ENCODE measurements at regions of chr11 and their contacts with region 1.

Region 1: DNA sequence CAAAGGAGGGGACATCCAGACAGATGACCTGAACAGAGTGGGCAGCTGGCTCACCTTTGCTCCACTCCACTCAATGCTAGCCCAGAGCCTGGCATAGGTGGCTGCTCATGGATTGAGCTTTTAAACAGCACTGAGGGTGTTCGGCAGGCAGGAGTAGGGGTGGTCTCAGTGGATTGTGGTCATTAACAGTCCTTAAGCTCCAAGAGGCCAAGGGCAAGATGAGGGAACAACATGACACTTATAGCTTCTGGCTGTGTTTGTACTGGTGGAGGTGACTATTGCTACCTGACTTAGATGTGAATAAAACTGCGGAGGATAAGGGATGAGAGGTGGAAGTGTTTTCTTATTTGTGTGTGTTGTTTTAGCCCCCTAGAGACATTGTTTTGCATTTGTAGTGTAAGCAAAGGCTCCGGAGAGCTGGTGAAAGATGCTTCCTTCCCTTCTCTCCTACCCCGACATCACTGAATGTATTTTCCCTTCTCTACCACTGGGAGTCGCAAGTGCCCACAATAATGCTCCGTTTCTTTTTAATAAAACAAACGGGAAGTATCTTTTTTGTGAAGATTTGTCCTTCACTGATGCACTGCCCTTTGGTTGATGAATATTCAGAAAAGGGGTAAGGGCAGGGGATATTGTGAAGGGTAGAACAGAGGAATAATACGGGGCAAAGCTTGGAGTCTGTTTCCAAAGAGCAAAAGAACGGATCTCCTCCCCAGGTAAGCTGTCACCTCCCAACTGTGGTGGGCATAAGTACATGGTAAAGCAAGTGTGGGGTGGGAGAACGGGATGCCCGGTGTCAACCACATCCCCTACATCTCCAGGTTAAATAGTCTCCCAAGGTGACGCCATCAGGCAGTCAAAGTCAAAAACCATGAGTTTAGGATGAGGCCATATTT is 27.5 kb upstream of the MTNR1B start:
- DNase-seq: no peak
- ATAC-seq: no peak
- H3K4me3 Mint-ChIP-seq: no peak overlapping the region
- H3K27ac Mint-ChIP-seq: no peak overlapping the region
- H3K4me1 Mint-ChIP-seq: no peaks in the 10 kb centered on the region
- H3K27me3 Mint-ChIP-seq: peaks cover 8% of the 10 kb centered on the region
- CTCF ChIP-seq: no peak

Region 2: GRCh38 chr11:92413757-92414513 is 528.0 kb before region 1 on chr11:
- CTCF ChIA-PET with region 1: no interaction called
- POLR2A ChIA-PET with region 1: no interaction called
- intact Hi-C with region 1: no loop called
- DNase-seq: no peak
- ATAC-seq: peak; percentile 45
- H3K4me3 Mint-ChIP-seq: peak overlapping the region; percentile 11
- H3K27ac Mint-ChIP-seq: no peak overlapping the region
- H3K4me1 Mint-ChIP-seq: peaks cover 11% of the 10 kb centered on the region
- H3K27me3 Mint-ChIP-seq: no peaks in the 10 kb centered on the region
- CTCF ChIP-seq: no peak

Region 3: DNA sequence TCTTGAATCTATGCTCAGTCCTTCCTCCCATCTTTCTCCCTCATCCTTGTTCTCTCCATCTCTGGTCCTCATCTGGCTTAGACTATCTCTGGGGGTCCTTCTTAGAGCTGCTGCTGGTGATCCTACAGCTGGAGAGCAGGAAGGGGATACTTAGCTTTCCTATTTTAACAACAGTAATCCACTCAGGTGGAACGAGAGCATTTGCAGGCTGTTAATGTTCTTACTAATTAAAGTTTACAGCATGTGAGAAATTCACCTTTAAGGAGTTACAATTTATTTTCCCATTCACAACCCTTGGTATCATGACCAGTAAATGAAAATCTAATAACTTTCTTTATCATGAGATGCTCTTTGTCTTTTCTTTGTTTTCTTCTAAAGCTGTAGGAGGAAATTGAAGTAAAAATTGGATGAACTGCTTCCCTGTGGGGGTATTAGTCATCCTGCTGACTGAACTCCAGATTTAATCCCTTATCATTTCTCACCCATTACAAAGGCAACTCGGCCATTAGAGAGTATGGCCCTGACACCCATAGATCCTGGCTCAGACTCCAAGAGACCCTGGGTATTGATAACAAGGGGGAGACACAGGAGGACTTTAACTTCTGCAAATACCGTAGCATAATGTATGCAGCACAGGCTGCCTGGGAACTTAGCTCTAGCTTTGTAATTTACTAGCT is 10.0 kb before region 1 on chr11:
- CTCF ChIA-PET with region 1: no interaction called
- POLR2A ChIA-PET with region 1: no interaction called
- intact Hi-C with region 1: no loop called
- DNase-seq: no peak
- ATAC-seq: no peak
- H3K4me3 Mint-ChIP-seq: no peak overlapping the region
- H3K27ac Mint-ChIP-seq: no peak overlapping the region
- H3K4me1 Mint-ChIP-seq: no peaks in the 10 kb centered on the region
- H3K27me3 Mint-ChIP-seq: no peaks in the 10 kb centered on the region
- CTCF ChIP-seq: no peak

Region 4: DNA sequence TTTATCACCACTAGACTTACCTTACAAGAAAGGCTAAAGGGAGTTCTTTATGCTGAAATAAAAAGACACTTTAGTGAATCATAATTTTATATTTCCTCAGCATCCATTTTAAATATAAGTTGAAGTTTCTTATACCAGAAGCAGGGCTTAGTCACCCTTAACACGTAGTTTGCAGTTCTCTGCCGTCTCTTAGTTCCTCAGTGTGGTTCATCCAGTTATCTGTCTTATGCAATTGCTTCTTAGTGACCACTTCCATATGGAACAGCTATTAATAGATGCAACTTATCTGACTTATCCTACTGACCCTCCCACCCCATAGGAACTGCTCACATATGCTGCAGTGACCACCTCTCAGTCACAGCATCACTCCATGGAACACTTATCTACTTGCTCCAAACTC is 267.5 kb after region 1 on chr11:
- CTCF ChIA-PET with region 1: no interaction called
- POLR2A ChIA-PET with region 1: no interaction called
- intact Hi-C with region 1: no loop called
- DNase-seq: no peak
- ATAC-seq: no peak
- H3K4me3 Mint-ChIP-seq: no peak overlapping the region
- H3K27ac Mint-ChIP-seq: no peak overlapping the region
- H3K4me1 Mint-ChIP-seq: no peaks in the 10 kb centered on the region
- H3K27me3 Mint-ChIP-seq: peaks cover 15% of the 10 kb centered on the region
- CTCF ChIP-seq: no peak

Region 5: DNA sequence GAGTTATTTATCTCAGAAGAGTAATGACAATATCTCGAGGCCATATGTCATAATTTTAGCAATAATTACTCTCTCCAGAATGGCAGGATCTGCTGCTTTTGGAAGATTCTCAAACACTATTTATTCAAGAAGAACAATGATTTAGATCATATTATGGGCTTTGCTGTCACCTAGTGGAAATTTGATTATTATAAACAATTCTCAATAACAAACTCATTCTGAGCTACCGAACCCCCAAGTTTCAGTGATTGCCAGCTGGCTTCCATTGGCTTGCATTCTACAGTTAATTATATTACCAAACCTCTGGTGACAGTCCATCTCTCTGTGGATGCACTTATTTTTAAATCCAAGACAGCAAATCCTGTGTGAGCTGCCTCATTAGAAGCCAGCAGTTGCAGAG is 283.7 kb after region 1 on chr11:
- CTCF ChIA-PET with region 1: interaction called, 14 read pairs
- POLR2A ChIA-PET with region 1: no interaction called
- intact Hi-C with region 1: no loop called
- DNase-seq: no peak
- ATAC-seq: no peak
- H3K4me3 Mint-ChIP-seq: no peak overlapping the region
- H3K27ac Mint-ChIP-seq: no peak overlapping the region
- H3K4me1 Mint-ChIP-seq: no peaks in the 10 kb centered on the region
- H3K27me3 Mint-ChIP-seq: no peaks in the 10 kb centered on the region
- CTCF ChIP-seq: no peak

Region 6: DNA sequence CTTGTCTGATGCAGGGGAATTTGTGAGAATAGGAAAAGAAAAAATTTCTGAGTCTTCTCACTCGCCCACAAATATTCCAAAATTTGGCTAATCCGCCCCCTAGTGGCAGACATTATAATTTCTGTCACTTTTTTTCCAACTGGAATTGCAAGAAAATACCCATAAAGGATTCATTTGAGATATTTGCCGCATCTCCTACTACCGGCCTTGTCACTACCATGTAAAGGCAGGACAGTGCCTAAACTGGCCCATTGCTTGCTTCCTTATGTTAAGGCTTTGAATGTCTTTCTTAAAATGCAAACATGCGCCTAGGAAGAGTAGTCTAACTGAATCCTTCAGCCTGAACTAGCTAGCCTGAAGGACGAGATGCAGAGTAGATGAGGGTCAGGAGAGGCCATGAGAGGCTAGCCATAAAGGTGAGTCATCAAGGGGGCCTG is 710.3 kb after region 1 on chr11:
- CTCF ChIA-PET with region 1: no interaction called
- POLR2A ChIA-PET with region 1: no interaction called
- intact Hi-C with region 1: loop called (anchors 1 kb)
- DNase-seq: no peak
- ATAC-seq: no peak
- H3K4me3 Mint-ChIP-seq: no peak overlapping the region
- H3K27ac Mint-ChIP-seq: no peak overlapping the region
- H3K4me1 Mint-ChIP-seq: no peaks in the 10 kb centered on the region
- H3K27me3 Mint-ChIP-seq: peaks cover 14% of the 10 kb centered on the region
- CTCF ChIP-seq: peak; percentile 45